Calu3 (cell line): ENCODE measurements at regions of chr7 and their contacts with region 1.

Region 1: GRCh38 chr7:97145068-97145467 is 27.6 kb downstream of the SDHAF3 start:
- DNase-seq: no peak
- H3K4me3 Mint-ChIP-seq: no peak overlapping the region
- H3K27ac Mint-ChIP-seq: no peak overlapping the region
- H3K4me1 Mint-ChIP-seq: no peaks in the 10 kb centered on the region
- H3K27me3 Mint-ChIP-seq: no peaks in the 10 kb centered on the region
- CTCF ChIP-seq: no peak

Region 2: DNA sequence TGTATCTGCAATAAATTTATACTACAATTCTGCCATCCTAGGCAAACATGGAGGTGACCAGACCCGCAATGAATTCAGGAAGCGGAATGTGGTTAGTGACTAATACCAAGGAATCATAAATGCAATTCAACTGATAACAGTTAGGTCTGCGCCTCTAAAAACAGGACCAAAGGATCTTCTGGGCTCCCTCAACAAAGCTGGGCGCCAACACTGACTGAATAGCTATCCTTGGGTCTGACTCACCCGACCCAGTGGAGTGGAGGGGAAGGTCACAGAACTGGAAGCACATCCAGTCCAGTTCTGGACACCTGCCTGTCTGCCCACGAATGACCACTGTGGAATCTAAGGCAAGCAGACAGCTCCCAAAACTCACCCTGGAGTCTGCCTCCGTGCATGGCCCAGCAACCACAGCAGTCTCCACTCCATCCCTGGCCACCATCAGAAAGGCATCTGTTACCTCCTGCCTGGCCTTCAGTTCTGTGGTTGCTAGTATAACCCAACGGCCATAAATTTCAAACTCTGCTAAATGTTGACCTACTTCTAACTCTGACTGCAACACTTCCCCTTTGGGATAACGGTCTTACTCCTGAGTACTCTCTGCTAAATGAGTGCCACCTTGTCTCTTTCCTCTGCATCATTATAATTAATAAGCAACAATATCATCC is 182.7 kb before region 1 on chr7:
- CTCF ChIA-PET with region 1: no interaction called
- intact Hi-C with region 1: no loop called
- DNase-seq: no peak
- H3K4me3 Mint-ChIP-seq: no peak overlapping the region
- H3K27ac Mint-ChIP-seq: no peak overlapping the region
- H3K4me1 Mint-ChIP-seq: no peaks in the 10 kb centered on the region
- H3K27me3 Mint-ChIP-seq: no peaks in the 10 kb centered on the region
- CTCF ChIP-seq: no peak

Region 3: DNA sequence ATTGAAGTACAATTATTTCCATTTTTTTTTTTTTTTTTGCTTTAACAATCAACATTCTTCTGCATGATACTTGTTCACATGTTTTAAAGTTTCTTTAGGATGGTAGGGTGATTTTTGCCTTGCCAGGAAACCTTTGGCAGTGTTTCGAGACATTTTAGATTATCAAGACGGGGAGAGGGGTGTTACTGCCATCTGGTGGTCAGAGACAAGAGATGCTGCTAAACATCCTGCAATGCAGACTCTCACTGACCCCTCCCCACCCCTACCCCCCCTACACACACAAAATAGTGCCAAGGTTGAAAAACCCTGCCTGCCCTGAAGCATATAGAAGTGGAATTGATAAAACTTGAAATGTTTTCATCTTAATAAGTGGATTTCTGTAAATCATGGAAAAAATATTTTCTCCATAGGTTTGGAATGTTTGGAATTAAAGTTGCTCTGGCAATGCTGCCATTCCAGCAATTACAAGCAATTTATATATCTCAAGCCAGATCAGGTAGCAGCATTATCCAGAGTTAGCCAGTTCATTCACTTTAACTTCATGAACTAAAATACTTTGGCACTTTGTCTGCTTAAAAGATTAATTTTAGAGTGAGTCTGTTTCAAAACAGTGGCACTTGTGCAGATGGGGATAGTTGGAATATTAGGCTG is 34.5 kb after region 1 on chr7:
- CTCF ChIA-PET with region 1: no interaction called
- intact Hi-C with region 1: loop called (anchors 2 kb)
- DNase-seq: peak; percentile 35
- H3K4me3 Mint-ChIP-seq: no peak overlapping the region
- H3K27ac Mint-ChIP-seq: no peak overlapping the region
- H3K4me1 Mint-ChIP-seq: no peaks in the 10 kb centered on the region
- H3K27me3 Mint-ChIP-seq: no peaks in the 10 kb centered on the region
- CTCF ChIP-seq: peak; percentile 52

Region 4: GRCh38 chr7:97835296-97836138 is 690.4 kb after region 1 on chr7:
- CTCF ChIA-PET with region 1: no interaction called
- intact Hi-C with region 1: loop called (anchors 5 kb)
- DNase-seq: peak; percentile 62
- H3K4me3 Mint-ChIP-seq: no peak overlapping the region
- H3K27ac Mint-ChIP-seq: no peak overlapping the region
- H3K4me1 Mint-ChIP-seq: no peaks in the 10 kb centered on the region
- H3K27me3 Mint-ChIP-seq: peaks cover 45% of the 10 kb centered on the region
- CTCF ChIP-seq: peak; percentile 32